Posterior vena cava (tissue), 2 donors: ENCODE measurements at regions of chr9 and their contacts with region 1.

Region 1: DNA sequence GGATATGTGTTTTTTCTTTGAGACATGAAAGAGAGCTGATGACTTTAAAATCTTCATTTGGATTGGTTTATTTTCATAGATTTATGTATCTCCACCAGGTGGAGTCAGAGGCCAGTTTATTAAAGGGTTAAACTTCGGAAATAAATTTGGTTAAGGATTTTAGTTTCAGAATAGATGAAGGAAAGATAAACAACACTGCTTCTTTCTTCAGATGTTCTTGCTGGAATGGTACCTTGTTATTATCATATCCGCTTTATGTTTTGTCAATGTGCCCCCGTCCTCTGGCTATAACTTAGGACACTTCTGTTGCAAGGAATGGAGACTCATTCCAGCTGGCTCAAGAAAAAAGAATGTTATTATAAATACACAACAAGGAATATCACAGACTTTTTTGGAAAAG is 81.2 kb downstream of the ALDH1A1 start:
- DNase-seq: no peak

Region 2: GRCh38 chr9:72661401-72662135 is 210.1 kb before region 1 on chr9:
- intact Hi-C with region 1: no loop called
- DNase-seq: no peak

Region 3: GRCh38 chr9:72937545-72937944 is 65.9 kb after region 1 on chr9:
- intact Hi-C with region 1: no loop called
- DNase-seq: no peak

Region 4: GRCh38 chr9:73380411-73380810 is 508.7 kb after region 1 on chr9:
- intact Hi-C with region 1: loop called in 1 of 2 experiments (anchors 5 kb)
- DNase-seq: no peak